ENCODE measurements at regions of chr2 and their contacts with region 1.

Region 1: DNA sequence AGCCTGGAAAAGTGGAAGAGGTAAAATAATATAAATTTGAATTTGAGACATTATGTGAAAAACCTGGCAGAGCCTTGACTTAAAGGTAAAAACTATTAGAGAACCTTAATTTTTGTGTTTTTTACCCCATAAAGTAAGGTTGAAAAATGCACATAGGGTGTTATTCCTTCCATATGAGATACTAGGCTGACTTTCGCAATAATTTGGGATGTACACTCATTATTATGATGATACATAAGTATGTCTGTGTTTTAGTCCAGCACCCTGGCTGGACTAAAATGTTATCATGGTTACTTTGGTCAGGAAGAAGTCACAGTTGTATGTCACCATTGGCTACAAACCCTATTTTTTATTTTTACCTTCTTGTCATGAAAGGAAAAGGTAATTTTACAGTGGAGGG is 19.8 kb downstream of the NEMP2 start:
- DNase-seq: no peak
- H3K4me3 ChIP-seq: no peak overlapping the region
- H3K27me3 ChIP-seq: no peaks in the 10 kb centered on the region
- CTCF ChIP-seq: no peak

Region 2: DNA sequence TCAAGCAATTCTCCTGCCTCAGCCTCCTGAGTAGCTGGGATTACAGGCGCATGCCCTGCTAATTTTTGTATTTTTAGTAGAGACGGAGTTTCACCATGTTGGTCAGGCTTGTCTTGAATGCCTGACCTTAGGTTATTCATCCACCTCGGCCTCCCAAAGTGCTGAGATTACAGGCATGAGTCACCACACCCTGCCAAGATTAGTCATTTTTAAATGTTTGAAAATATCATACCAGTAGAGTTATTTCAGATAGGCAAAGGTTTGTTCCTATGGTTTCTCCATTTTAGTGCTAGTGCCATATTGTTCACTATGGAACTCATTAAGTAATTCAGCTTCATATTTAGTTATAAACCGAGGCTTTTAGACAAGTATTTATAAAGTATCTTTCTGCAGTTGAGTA is 247.4 kb before region 1 on chr2:
- CTCF ChIA-PET with region 1: no interaction called
- POLR2A ChIA-PET with region 1: no interaction called
- DNase-seq: peak; percentile 31
- H3K4me3 ChIP-seq: no peak overlapping the region
- H3K27me3 ChIP-seq: no peaks in the 10 kb centered on the region
- CTCF ChIP-seq: no peak

Region 3: DNA sequence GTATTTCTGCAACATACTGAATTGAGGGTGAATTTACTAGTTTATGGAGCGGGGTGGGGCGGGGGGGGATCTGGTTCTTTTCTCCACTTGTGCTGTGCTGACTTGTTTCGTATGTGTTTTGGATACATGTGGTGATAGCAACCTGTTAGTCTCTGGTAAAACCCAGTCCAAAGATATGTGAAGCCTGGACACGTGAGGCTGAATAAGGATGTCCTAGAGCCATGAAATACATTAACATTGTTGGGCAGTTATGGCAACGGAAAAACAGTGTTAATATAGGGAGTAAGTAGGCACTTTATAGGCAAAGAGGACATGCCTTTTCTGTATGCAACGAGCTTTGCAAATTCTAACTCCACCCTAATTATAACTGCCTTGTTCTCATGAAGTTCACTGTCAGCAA is 61.9 kb after region 1 on chr2:
- CTCF ChIA-PET with region 1: no interaction called
- POLR2A ChIA-PET with region 1: interaction called, 14 read pairs
- DNase-seq: no peak
- H3K4me3 ChIP-seq: no peak overlapping the region
- H3K27me3 ChIP-seq: no peaks in the 10 kb centered on the region
- CTCF ChIP-seq: no peak

Measured in BJ (cell line).